ENCODE measurements at regions of chr20 and their contacts with region 1.

Region 1: DNA sequence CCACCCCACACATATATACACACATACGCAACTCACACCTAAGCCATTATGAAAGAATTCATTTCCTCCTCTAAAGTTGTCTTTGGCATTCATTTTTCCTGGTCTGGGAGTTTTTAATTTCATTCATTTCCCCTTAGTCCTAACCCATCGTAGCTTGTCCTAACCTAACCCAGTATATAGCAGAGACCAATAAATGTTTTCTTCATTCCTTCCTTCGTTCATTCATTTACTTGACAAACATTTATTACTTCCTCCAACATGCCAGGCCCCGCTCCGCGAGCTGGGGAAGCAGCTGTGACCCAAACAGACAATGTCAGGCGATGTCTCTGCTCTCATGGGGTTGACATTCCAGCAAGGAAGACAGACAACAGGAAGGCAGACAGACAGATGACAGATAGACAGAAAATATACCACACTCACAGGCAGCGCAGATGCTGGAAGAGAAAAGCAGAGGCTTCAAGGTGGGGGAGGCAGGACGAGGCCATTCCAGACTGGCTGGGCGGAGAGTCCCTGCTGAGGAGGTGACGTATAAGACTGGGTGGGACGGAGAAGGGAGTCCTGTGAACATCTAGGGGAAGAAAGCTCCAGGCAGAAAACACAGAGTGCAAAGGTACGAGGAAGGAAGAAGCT is 33.7 kb upstream of the SIRPA start:
- DNase-seq: no peak
- ATAC-seq: no peak
- H3K4me3 ChIP-seq: no peak overlapping the region
- H3K4me3 Mint-ChIP-seq: no peak overlapping the region
- H3K27ac ChIP-seq: no peak overlapping the region
- H3K27ac Mint-ChIP-seq: no peak overlapping the region
- H3K4me1 ChIP-seq: no peaks in the 10 kb centered on the region
- H3K4me1 Mint-ChIP-seq: no peaks in the 10 kb centered on the region
- H3K27me3 ChIP-seq: peaks cover 0 to 4% of the 10 kb centered on the region in 2 experiments
- H3K27me3 Mint-ChIP-seq: peaks cover 16% of the 10 kb centered on the region
- CTCF ChIP-seq: no peak

Region 2: GRCh38 chr20:2955257-2955970 is 1094.0 kb after region 1 on chr20:
- CTCF ChIA-PET with region 1: no interaction called
- POLR2A ChIA-PET with region 1: interaction called, 10 read pairs
- intact Hi-C with region 1: no loop called
- DNase-seq: no peak
- ATAC-seq: no peak
- H3K4me3 ChIP-seq: no peak overlapping the region
- H3K4me3 Mint-ChIP-seq: no peak overlapping the region
- H3K27ac ChIP-seq: no peak overlapping the region
- H3K27ac Mint-ChIP-seq: no peak overlapping the region
- H3K4me1 ChIP-seq: no peaks in the 10 kb centered on the region
- H3K4me1 Mint-ChIP-seq: peaks cover 10% of the 10 kb centered on the region
- H3K27me3 ChIP-seq: no peaks in the 10 kb centered on the region
- H3K27me3 Mint-ChIP-seq: no peaks in the 10 kb centered on the region
- CTCF ChIP-seq: no peak

Measured in CD8-positive, alpha-beta T cell (primary cell).